HepG2 (cell line): ENCODE measurements at regions of chr5 and their contacts with region 1.

Region 1: DNA sequence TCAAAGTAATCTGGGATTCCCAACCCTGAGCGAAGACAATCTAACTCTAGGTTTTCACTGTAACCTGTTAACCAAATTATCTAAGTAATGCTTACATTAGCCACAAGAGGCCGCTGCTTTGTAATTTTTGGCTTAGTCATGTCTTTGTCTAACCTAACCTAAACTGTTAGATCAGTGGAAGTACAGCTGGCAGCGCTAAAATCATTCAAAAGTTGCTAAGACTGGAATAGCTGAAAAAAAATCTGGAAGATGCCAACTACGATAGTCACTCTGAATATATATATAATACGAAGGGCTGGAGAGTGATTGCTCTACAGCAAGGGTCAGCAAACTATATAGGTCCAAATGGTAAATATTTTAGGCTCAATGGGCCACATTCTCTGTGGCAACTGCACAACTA is 60.2 kb downstream of the FBXO38 start:
- DNase-seq: peak; percentile 65
- ATAC-seq: peak; percentile 91
- H3K4me3 ChIP-seq: no peak overlapping the region
- H3K27ac ChIP-seq: no peak overlapping the region
- H3K4me1 ChIP-seq: no peaks in the 10 kb centered on the region
- H3K27me3 ChIP-seq: no peaks in the 10 kb centered on the region
- CTCF ChIP-seq: peak; percentile 72
- EP300 ChIP-seq: no peak
- POLR2A ChIP-seq: no peak
- RAD21 ChIP-seq: no peak

Region 2: DNA sequence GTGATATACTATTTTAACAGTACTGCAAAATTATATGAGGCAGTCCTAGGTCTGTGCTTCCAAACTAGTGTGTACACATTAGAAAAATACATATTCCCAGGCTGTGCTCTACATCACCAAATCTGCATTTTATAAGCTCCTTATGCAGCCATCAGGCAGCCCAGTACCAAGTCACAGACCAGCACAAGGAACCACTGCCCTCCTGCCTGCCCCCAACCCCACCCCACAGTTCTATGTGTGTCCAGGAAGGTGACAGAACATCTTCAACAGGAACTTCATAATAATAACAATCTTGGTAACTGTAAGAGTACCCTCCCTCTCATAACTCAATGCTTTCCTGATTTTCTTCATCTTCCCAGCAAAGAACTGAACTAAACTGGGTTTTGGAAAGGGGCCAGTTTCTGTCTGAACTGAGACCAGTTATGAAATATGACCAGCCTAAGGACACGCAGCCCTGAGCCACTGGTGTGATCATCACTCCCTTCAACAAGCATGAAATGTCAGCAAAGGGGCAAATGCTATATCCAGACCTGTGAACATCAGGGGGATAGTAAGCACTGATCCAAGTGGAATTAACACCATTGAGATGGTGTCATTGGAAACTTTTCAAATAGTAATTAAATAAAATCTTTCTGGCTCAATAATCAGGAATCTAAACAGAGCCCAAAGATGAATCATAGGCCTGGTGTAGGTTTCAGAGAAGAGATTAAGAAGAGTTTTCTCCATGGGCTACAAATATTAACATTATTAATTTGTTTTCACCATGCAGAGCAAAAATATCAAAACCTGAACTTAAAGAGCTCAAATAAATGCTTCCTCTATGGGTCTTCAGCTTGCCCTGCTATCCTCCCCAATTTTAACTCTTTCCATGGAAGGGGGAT is 1016.2 kb before region 1 on chr5:
- CTCF ChIA-PET with region 1: no interaction called
- POLR2A ChIA-PET with region 1: no interaction called
- in situ Hi-C with region 1: no loop called
- intact Hi-C with region 1: no loop called
- DNase-seq: no peak
- ATAC-seq: no peak
- H3K4me3 ChIP-seq: no peak overlapping the region
- H3K27ac ChIP-seq: no peak overlapping the region
- H3K4me1 ChIP-seq: no peaks in the 10 kb centered on the region
- H3K27me3 ChIP-seq: no peaks in the 10 kb centered on the region
- CTCF ChIP-seq: no peak
- EP300 ChIP-seq: no peak
- POLR2A ChIP-seq: no peak
- RAD21 ChIP-seq: no peak

Region 3: GRCh38 chr5:148482691-148483462 is 38.9 kb after region 1 on chr5:
- CTCF ChIA-PET with region 1: interaction called, 7 read pairs
- POLR2A ChIA-PET with region 1: no interaction called
- in situ Hi-C with region 1: no loop called
- intact Hi-C with region 1: loop called (anchors 1 kb)
- DNase-seq: peak; percentile 67
- ATAC-seq: peak; percentile 96
- H3K4me3 ChIP-seq: no peak overlapping the region
- H3K27ac ChIP-seq: no peak overlapping the region
- H3K4me1 ChIP-seq: peaks cover 9% of the 10 kb centered on the region; the same call in 1 of the 2 replicates
- H3K27me3 ChIP-seq: no peaks in the 10 kb centered on the region
- CTCF ChIP-seq: peak; percentile 79
- EP300 ChIP-seq: no peak
- POLR2A ChIP-seq: no peak
- RAD21 ChIP-seq: no peak

Region 4: GRCh38 chr5:148632255-148633066 is 188.5 kb after region 1 on chr5:
- CTCF ChIA-PET with region 1: no interaction called
- POLR2A ChIA-PET with region 1: no interaction called
- in situ Hi-C with region 1: no loop called
- intact Hi-C with region 1: no loop called
- DNase-seq: no peak
- ATAC-seq: no peak
- H3K4me3 ChIP-seq: no peak overlapping the region
- H3K27ac ChIP-seq: no peak overlapping the region
- H3K4me1 ChIP-seq: no peaks in the 10 kb centered on the region
- H3K27me3 ChIP-seq: no peaks in the 10 kb centered on the region
- CTCF ChIP-seq: no peak
- EP300 ChIP-seq: no peak
- POLR2A ChIP-seq: no peak
- RAD21 ChIP-seq: no peak

Region 5: GRCh38 chr5:148687427-148687826 is 243.4 kb after region 1 on chr5:
- CTCF ChIA-PET with region 1: interaction called, 3 read pairs
- POLR2A ChIA-PET with region 1: no interaction called
- in situ Hi-C with region 1: no loop called
- intact Hi-C with region 1: loop called (anchors 1 kb)
- DNase-seq: peak; percentile 57
- ATAC-seq: peak; percentile 100
- H3K4me3 ChIP-seq: no peak overlapping the region
- H3K27ac ChIP-seq: no peak overlapping the region
- H3K4me1 ChIP-seq: peaks cover 3% of the 10 kb centered on the region
- H3K27me3 ChIP-seq: no peaks in the 10 kb centered on the region
- CTCF ChIP-seq: peak; percentile 60
- EP300 ChIP-seq: no peak
- POLR2A ChIP-seq: no peak
- RAD21 ChIP-seq: 0 out of 2 replicates have a peak, but pooled peaks have one; percentile 23